Activated CD4-positive, alpha-beta T cell treated with anti-CD3 and anti-CD28 coated beads for 36 hours (primary cell): ENCODE measurements at regions of chr7 and their contacts with region 1.

Region 1: DNA sequence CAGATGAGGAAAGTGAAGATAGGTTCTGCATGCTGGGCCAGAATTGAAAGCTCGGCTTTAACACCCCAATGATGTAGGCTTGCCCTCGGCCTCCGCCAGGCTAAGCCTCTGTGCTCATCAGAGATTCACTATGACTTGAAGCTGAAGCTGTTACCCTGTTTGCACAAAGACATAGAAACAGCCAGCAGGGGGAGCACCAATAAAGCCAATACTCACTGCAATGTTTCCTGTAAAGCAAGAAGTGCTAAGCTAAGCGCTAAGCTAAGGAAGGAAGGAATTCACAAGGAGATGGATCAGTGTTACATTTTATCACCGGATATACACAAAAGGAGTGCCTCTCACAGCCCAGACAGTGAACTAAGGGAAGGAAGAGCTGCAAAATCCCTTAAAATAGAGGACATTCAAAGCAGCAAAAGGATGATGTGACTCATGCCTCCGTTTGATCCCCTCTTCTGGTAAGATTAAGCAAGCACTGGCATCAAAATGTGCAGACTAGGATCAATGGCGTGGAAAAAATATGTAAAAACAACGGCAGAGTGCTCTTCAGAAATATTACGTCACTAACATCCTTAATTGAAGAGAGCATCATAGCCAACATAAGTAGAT is 153.8 kb downstream of the COBL start:
- DNase-seq: peak; percentile 89
- ATAC-seq: peak; percentile 96
- H3K4me3 Mint-ChIP-seq: no peak overlapping the region
- H3K27ac Mint-ChIP-seq: no peak overlapping the region
- H3K4me1 Mint-ChIP-seq: peaks cover 9% of the 10 kb centered on the region
- H3K27me3 Mint-ChIP-seq: peaks cover 6% of the 10 kb centered on the region

Region 2: DNA sequence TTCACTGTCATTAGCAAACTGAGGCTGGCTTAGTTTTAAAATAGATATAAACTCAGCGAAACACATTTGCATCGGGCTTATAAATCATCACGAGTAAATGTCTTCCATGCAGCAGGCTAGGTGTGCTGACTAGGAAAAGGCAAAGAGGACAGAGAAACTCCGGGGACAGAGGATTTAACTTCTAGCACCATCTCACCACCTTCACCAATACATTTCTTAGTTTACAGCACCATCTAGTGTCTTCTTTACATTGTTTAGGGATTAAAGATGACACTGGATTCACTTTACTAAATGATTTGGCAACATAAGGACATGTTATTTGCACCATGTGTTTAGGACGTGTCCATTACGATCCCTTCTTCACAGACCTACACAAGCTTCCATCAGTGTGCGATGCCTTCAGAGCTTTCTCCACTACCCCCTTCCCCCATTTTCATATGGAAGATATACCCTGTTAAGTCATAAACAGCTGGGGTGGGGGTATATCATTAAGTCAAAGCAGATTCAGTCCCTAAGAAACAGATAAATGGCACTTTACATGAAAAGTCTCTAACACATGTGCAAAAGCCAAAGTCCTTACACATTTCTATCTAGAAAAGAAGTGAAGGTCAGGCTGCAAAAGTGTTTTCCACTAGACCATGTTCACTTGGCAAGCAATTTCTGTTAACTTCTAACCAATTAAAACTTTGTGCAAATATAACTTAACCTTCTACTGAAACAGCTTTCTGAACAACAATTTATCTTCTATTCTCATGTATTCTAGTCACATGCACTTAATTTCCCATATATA is 483.4 kb before region 1 on chr7:
- CTCF ChIA-PET with region 1: interaction called, 4 read pairs
- POLR2A ChIA-PET with region 1: interaction called, 3 read pairs
- intact Hi-C with region 1: loop called in 1 of 2 experiments (anchors 5 kb)
- DNase-seq: no peak
- ATAC-seq: peak; percentile 78
- H3K4me3 Mint-ChIP-seq: no peak overlapping the region
- H3K27ac Mint-ChIP-seq: no peak overlapping the region
- H3K4me1 Mint-ChIP-seq: no peaks in the 10 kb centered on the region
- H3K27me3 Mint-ChIP-seq: no peaks in the 10 kb centered on the region

Region 3: GRCh38 chr7:51060536-51060935 is 102.3 kb before region 1 on chr7:
- CTCF ChIA-PET with region 1: interaction called, 25 read pairs
- POLR2A ChIA-PET with region 1: no interaction called
- intact Hi-C with region 1: loop called in 1 of 2 experiments (anchors 5 kb)
- DNase-seq: no peak
- ATAC-seq: no peak
- H3K4me3 Mint-ChIP-seq: no peak overlapping the region
- H3K27ac Mint-ChIP-seq: no peak overlapping the region
- H3K4me1 Mint-ChIP-seq: no peaks in the 10 kb centered on the region
- H3K27me3 Mint-ChIP-seq: no peaks in the 10 kb centered on the region

Region 4: GRCh38 chr7:51141451-51142003 is 21.3 kb before region 1 on chr7:
- CTCF ChIA-PET with region 1: interaction called, 72 read pairs
- POLR2A ChIA-PET with region 1: no interaction called
- intact Hi-C with region 1: no loop called
- DNase-seq: peak; percentile 40
- ATAC-seq: peak; percentile 77
- H3K4me3 Mint-ChIP-seq: no peak overlapping the region
- H3K27ac Mint-ChIP-seq: no peak overlapping the region
- H3K4me1 Mint-ChIP-seq: peaks cover 23% of the 10 kb centered on the region
- H3K27me3 Mint-ChIP-seq: peaks cover 3% of the 10 kb centered on the region

Region 5: GRCh38 chr7:51187941-51188340 is 25.1 kb after region 1 on chr7:
- CTCF ChIA-PET with region 1: interaction called, 11 read pairs
- POLR2A ChIA-PET with region 1: no interaction called
- intact Hi-C with region 1: no loop called
- DNase-seq: no peak
- ATAC-seq: no peak
- H3K4me3 Mint-ChIP-seq: no peak overlapping the region
- H3K27ac Mint-ChIP-seq: no peak overlapping the region
- H3K4me1 Mint-ChIP-seq: no peaks in the 10 kb centered on the region
- H3K27me3 Mint-ChIP-seq: no peaks in the 10 kb centered on the region

Region 6: DNA sequence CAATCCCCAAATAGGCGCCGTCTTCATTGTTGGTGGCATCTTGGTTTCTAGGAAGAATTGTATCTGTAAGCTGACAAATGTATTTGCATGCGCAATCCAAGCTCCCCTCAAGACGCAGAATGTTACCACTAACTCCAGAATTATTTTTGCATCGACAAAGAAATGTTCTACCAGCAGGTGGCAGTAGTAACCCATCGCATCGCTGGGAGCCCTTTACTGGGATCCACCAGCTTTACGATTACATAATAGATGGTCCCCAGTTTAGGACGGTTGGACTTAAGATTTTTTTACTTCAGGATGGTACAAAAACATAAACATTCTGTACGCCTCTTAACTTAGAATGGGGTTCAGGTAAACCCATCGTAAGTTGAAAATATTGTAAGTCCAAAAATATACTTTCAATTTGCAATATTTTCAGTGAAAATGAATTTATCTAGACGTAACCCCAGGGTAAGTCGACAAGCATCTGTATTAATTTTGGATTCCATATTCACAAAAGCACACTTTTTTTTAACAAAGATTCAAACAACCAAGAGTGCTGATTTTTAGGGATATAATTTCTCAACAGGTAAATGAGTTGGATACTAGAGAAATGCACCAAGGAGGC is 267.8 kb after region 1 on chr7:
- CTCF ChIA-PET with region 1: interaction called, 8 read pairs
- POLR2A ChIA-PET with region 1: no interaction called
- intact Hi-C with region 1: loop called in 1 of 2 experiments (anchors 5 kb)
- DNase-seq: peak; percentile 66
- ATAC-seq: no peak
- H3K4me3 Mint-ChIP-seq: no peak overlapping the region
- H3K27ac Mint-ChIP-seq: no peak overlapping the region
- H3K4me1 Mint-ChIP-seq: no peaks in the 10 kb centered on the region
- H3K27me3 Mint-ChIP-seq: peaks cover 1% of the 10 kb centered on the region